ENCODE measurements at regions of chr16 and their contacts with region 1.

Region 1: DNA sequence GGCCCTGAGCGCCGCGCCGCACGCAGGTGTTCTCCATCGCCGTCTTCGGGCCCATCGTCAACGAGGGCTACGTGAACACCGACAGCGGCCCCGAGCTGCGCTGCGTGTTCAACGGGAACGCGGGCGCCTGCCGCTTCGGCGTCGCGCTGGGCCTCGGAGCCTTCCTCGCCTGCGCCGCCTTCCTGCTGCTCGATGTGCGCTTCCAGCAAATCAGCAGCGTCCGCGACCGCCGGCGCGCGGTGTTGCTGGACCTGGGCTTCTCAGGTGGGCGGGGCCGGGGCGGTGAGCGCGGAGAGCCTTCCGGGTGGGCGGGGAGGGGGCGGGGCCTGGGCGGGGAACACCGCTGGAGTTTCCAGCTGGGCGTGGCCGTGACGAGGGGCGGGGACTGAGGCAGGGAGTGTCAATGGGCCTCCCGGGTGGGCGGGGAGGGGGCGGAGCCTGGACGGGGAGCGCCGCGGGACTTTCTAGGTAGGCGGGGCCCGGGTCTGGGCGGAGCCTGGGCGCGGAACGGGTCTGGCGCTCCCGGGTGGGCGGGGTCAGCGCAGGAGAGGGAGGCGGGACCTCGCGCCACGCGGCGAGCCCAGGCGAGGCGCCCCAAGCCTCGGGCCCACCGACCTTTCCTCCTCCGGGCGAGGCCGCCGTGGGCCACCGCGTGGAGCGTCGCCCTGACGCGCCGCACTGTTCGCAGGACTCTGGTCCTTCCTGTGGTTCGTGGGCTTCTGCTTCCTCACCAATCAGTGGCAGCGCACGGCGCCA is 2.4 kb downstream of the SYNGR3 start:
- DNase-seq: peak; percentile 37
- ATAC-seq: peak; percentile 80
- H3K4me3 ChIP-seq: peak overlapping the region; percentile 65; the same call in 1 of the 2 replicates
- H3K27ac ChIP-seq: peak overlapping the region; percentile 27; the same call in 1 of the 2 replicates
- H3K4me1 ChIP-seq: peaks cover 26% of the 10 kb centered on the region
- H3K27me3 ChIP-seq: no peaks in the 10 kb centered on the region
- CTCF ChIP-seq: no peak
- EP300 ChIP-seq: no peak
- POLR2A ChIP-seq: peak; percentile 84
- RAD21 ChIP-seq: no peak

Region 2: DNA sequence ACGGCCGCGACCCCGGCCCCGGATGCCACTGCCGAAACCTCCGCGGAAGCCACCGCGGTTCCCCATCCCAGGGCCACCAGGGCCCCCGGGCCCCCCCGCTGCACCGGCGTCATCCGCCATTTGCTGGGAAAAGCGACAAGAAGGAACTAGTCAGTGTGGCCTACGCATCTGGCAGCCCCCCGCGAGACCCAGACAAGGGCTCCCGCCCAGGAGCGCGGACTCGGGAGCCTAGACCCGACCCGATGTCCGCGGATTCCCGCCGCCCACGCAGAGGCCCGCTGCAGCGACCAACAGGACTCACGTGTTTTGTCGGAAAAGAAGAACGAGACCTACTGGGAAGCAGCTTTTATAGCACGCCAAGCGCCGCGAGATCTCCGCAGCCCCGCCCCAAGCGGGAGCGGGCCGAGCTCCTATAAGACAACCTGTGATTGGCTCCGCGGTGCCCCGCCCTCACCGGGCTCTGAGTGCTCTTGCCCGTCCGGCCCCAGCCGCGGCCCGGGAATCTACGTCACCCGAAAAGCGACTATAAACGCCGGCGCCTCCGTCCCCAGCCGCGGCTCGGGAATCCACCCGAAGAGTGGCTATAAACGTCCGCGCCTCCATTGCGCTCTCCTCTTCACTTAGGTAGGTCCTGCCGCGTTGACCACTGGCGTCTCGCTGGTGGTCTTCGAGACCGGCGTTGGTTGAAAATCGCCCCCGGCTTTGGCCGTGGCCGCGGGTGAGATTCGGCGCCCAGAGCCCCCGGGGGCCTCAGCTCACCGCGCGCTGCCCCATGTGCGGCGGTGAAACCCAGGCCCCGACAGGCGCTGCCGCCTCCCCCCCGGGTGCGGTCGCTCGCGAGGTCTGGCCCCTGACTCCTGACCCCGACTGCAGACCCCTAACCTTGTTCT is 27.4 kb before region 1 on chr16 and contains the start of gene RPS2:
- CTCF ChIA-PET with region 1: interaction called, 4 read pairs
- POLR2A ChIA-PET with region 1: interaction called, 14 read pairs
- RAD21 ChIA-PET with region 1: interaction called, 3 read pairs
- SMC1A ChIA-PET with region 1: no interaction called
- in situ Hi-C with region 1: no loop called
- intact Hi-C with region 1: no loop called
- DNase-seq: peak; percentile 83
- ATAC-seq: peak; percentile 80
- H3K4me3 ChIP-seq: peak within 1 kb of the TSS; percentile 98
- H3K27ac ChIP-seq: peak within 1 kb of the TSS; percentile 90
- H3K4me1 ChIP-seq: peaks cover 14% of the 10 kb centered on the region
- H3K27me3 ChIP-seq: no peaks in the 10 kb centered on the region
- CTCF ChIP-seq: no peak
- EP300 ChIP-seq: no peak
- POLR2A ChIP-seq: peak; percentile 97
- RAD21 ChIP-seq: no peak
- polyA plus RNA-seq, gene RPS2: 1,295 to 3,629 TPM

Region 3: DNA sequence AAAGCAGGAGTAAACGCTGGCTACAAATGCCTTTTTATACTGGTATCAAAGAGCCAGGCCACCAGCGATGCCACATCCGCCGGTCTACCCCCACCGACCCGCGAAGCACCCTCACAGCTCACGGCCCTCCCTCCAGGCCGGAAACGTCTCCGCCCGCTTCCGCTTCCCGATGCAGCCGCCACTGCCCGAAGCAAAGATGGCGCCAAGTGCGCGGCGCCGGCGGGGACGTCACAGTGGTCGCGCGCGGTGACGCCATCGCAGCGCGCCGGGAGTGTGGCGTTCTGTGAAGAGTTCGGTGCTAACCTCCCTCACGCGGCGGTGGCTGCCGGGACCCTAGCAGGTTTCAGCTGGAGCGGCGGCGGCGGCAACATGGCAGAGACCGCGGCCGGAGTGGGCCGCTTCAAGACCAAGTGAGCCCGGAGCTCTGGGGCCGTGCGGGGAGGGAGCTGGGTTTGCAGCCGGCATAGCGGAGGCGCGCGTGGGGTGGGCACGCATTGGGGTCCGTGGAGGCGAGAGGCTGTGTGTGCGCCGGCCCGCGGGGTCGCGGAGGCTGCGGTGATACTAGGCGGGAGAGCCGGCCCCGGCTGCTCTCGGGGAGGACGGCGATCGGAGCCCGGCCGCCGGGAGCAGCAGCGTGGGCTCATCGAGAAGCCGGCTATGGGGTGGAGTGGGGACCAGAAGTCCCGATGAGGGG is 20.2 kb before region 1 on chr16 and contains the start of gene TBL3:
- CTCF ChIA-PET with region 1: interaction called, 4 read pairs
- POLR2A ChIA-PET with region 1: interaction called, 14 read pairs
- RAD21 ChIA-PET with region 1: no interaction called
- SMC1A ChIA-PET with region 1: no interaction called
- in situ Hi-C with region 1: no loop called
- intact Hi-C with region 1: no loop called
- DNase-seq: peak; percentile 70
- ATAC-seq: peak; percentile 98
- H3K4me3 ChIP-seq: peak within 1 kb of the TSS; percentile 93
- H3K27ac ChIP-seq: peak within 1 kb of the TSS; percentile 89
- H3K4me1 ChIP-seq: peaks cover 12% of the 10 kb centered on the region
- H3K27me3 ChIP-seq: no peaks in the 10 kb centered on the region
- CTCF ChIP-seq: no peak
- EP300 ChIP-seq: peak in 1 of 2 experiments; percentile 49; a peak in 1 of 4 replicates
- POLR2A ChIP-seq: peak; percentile 97
- RAD21 ChIP-seq: no peak
- polyA plus RNA-seq, gene TBL3: 1.2 to 8.1 TPM

Region 4: DNA sequence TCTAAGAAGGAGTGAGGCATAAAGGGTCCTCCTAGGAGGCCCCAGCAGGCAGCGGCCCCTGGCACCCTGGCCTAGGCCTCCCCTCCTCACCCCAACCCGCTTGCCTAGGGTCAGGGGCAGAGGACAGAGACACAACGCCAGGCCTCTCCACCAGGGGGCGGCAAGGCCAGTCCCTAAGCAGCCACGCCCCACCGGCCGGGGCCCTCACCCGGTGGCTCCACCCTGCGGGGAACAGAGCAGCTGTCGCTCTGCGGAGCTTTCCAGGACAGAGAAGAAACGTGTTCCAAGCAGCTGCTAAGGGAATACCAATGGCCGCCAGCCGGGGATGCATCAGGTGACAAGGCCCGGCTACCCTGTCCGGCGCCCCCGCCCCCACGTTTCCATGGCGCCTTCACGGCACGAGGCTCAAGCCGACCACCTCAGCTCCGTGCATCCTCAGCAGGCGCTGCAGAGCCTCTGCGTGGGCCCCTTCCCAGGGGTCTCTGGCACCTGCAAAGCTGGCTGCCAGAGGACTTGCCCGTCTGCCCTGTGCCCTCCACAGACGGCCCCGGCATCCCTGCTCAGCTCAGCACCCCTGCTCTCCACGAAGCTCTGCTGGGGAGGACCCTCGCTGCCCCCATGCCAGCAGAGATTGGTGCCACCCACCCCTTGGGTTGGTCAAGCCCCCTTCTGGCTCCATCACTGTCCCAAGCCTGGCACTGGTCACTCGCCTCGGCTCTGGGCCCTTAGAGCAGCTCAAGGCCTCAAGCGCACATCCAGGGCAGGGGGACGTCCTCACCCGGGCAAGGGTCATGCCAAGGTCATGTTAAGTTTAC is 11.9 kb after region 1 on chr16:
- CTCF ChIA-PET with region 1: interaction called, 54 read pairs
- POLR2A ChIA-PET with region 1: interaction called, 10 read pairs
- RAD21 ChIA-PET with region 1: interaction called, 4 read pairs
- SMC1A ChIA-PET with region 1: no interaction called
- in situ Hi-C with region 1: no loop called
- intact Hi-C with region 1: no loop called
- DNase-seq: no peak
- ATAC-seq: peak; percentile 97
- H3K4me3 ChIP-seq: no peak overlapping the region
- H3K27ac ChIP-seq: no peak overlapping the region
- H3K4me1 ChIP-seq: peaks cover 15% of the 10 kb centered on the region
- H3K27me3 ChIP-seq: no peaks in the 10 kb centered on the region
- CTCF ChIP-seq: peak; percentile 96 to 99 (median 99); a peak in 5 of 6 replicates
- EP300 ChIP-seq: no peak
- POLR2A ChIP-seq: peak; percentile 16
- RAD21 ChIP-seq: peak; percentile 43

Region 5: GRCh38 chr16:2023098-2023925 is 31.2 kb after region 1 on chr16:
- CTCF ChIA-PET with region 1: no interaction called
- POLR2A ChIA-PET with region 1: no interaction called
- RAD21 ChIA-PET with region 1: no interaction called
- SMC1A ChIA-PET with region 1: no interaction called
- in situ Hi-C with region 1: no loop called
- intact Hi-C with region 1: no loop called
- DNase-seq: peak; percentile 51
- ATAC-seq: peak; percentile 84
- H3K4me3 ChIP-seq: peak overlapping the region; percentile 19; the same call in 1 of the 2 replicates
- H3K27ac ChIP-seq: no peak overlapping the region
- H3K4me1 ChIP-seq: peaks cover 7% of the 10 kb centered on the region
- H3K27me3 ChIP-seq: peaks cover 13 to 17% of the 10 kb centered on the region in 2 experiments
- CTCF ChIP-seq: peak; percentile 97 to 99 (median 98)
- EP300 ChIP-seq: no peak
- POLR2A ChIP-seq: peak; percentile 29; the same call in 1 of the 2 replicates
- RAD21 ChIP-seq: peak; percentile 90

Region 6: DNA sequence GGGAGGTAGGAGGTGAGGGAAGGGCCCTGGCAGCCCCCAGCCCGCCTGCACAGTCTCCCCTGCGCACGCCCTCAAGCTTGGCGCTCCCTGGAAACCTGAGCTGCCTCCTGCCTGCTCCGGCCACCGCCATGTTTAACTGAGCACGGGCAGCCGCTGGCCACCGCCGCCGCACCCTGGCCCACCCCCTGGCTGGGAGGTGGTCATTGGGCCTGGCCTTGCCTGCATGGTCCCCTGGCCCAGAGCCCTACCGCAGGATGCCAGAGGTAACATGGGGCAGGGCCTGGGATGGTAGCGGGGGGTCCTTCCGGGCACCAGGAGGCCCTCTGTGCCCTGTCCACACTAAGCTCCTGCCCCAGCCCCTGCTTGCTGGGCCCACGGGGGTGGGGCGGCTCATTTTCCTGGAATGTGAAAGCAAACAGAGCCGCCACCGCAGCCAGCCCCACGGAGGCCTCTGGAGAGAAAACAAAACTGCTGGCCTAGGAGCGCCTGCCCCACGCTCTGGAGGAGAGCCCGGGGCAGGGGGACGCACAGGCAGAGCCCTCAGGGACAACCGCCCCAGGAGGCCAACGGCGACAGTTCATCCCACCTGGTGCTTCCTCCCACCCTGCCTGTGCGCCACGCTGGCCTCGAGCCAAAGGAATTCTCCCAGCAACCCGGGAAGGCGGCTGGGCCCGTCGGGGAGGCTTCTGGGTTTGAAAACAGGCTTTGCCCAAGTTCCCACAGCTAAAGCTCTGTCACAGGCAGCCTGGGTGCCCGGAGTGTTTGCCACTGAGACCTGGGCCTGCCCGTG is 43.5 kb after region 1 on chr16:
- CTCF ChIA-PET with region 1: no interaction called
- POLR2A ChIA-PET with region 1: no interaction called
- RAD21 ChIA-PET with region 1: no interaction called
- SMC1A ChIA-PET with region 1: no interaction called
- in situ Hi-C with region 1: no loop called
- intact Hi-C with region 1: no loop called
- DNase-seq: no peak
- ATAC-seq: no peak
- H3K4me3 ChIP-seq: no peak overlapping the region
- H3K27ac ChIP-seq: no peak overlapping the region
- H3K4me1 ChIP-seq: no peaks in the 10 kb centered on the region
- H3K27me3 ChIP-seq: no peaks in the 10 kb centered on the region
- CTCF ChIP-seq: no peak
- EP300 ChIP-seq: no peak
- POLR2A ChIP-seq: no peak
- RAD21 ChIP-seq: no peak

Measured in GM12878 (cell line).